Endothelial cell of umbilical vein (primary cell): ENCODE measurements at regions of chr6 and their contacts with region 1.

Region 1: GRCh38 chr6:169831450-169832246 is 80.2 kb downstream of the ERMARD start:
- DNase-seq: peak; percentile 77
- H3K4me3 ChIP-seq: no peak overlapping the region
- H3K27ac ChIP-seq: no peak overlapping the region
- H3K4me1 ChIP-seq: peaks cover 14% of the 10 kb centered on the region
- H3K27me3 ChIP-seq: peaks cover 0 to 1% of the 10 kb centered on the region in 2 experiments
- CTCF ChIP-seq: peak; percentile 85 to 93
- POLR2A ChIP-seq: no peak

Region 2: GRCh38 chr6:169738204-169738975 is 93.3 kb before region 1 on chr6:
- CTCF ChIA-PET with region 1: no interaction called
- POLR2A ChIA-PET with region 1: no interaction called
- dilution Hi-C with region 1: no loop called
- intact Hi-C with region 1: no loop called
- DNase-seq: no peak
- H3K4me3 ChIP-seq: no peak overlapping the region
- H3K27ac ChIP-seq: no peak overlapping the region
- H3K4me1 ChIP-seq: no peaks in the 10 kb centered on the region
- H3K27me3 ChIP-seq: peaks cover 0 to 8% of the 10 kb centered on the region in 2 experiments
- CTCF ChIP-seq: no peak
- POLR2A ChIP-seq: no peak

Region 3: DNA sequence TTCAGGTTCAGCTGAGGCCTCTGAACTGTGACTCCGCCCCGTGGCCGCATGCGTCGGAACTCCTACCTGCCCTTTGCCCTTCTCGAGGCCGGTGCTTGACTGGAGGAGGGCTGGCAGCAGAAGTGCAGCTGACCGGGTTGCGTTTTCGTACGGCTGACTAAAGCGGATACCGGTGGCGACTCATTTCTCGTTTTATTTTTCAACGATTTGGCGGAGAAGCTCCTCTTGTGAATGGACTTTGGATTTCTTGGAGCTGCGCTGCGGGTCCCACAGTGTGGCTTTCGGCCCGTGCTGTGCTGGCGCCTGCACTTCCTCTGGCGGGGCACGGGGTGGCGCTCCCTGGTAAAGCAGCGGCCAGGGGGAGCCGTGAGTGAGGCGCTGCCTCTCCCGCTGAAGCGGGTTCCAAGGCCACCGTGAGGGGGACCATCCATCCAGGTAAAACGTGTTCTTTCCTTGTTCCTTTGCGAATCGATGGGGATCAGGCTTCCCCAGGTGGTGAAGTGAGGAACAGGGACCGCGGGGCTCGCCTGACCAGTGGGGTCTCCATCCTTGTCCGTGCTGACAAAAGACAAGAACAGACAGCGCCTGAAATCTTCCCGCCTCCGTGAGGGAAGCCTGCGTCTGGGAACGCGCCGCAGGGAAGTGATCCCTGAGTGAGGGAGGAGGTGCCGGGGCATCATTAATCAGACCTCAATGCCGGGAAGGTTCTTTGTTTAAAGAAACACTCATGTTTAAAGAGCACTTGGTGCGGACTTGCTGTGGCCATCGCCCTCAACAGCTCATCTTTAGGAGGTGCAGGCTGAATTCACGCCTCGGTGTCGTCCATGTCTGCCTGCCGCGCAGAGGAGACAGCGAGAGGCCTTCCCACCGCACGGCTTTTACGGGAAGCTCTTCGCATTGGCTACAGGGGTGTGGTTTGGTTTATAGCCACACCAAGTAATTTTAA is 41.4 kb before region 1 on chr6:
- CTCF ChIA-PET with region 1: interaction called, 35 read pairs
- POLR2A ChIA-PET with region 1: no interaction called
- dilution Hi-C with region 1: no loop called
- intact Hi-C with region 1: loop called (anchors 1 kb)
- DNase-seq: peak; percentile 75
- H3K4me3 ChIP-seq: peak overlapping the region; percentile 14 to 33 (median 24)
- H3K27ac ChIP-seq: no peak overlapping the region
- H3K4me1 ChIP-seq: peaks cover 6% of the 10 kb centered on the region
- H3K27me3 ChIP-seq: peaks cover 0 to 4% of the 10 kb centered on the region in 2 experiments
- CTCF ChIP-seq: peak; percentile 97 to 99
- POLR2A ChIP-seq: no peak

Region 4: DNA sequence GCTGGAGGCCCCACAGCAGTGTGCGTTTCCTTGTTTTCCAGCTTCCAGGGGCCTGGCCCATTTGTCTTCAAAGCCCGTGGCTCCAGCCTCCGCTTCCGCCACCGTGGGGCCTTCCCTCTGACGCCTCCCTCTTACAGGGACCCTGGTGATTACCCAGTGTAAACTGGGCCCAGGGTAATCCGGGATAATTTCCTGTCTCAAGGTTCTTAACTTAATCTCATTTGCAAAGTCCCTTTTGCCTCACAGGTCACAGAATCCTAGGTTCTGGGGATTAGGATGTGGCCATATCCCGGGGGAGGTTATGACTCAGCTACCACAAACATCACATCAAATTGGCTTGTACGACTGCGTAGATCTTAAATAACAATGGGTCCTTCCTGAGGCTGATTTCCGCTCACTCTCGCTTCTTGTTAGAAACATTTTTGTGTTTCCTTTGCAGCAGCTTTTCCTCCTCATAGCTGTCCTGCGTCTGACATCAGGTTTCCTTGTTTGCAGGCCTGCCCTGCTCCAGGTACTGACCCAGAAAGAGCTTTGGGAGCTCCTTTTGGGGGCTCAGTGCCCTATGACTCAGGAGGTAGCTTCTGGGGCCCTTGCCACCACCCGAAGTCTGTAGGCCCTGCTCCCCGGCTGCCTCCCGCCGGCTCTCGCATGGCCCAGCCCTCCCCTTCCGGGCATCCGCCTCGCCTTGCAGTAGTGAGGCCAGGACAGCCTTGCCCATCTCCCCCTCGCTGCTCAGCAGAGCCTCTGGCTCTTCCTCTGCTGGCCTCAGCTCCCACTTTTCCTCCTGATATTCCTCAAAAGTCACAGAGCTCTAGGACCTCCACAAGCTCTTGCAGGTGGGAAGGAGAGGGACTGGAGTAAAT is 20.2 kb after region 1 on chr6:
- CTCF ChIA-PET with region 1: interaction called, 42 read pairs
- POLR2A ChIA-PET with region 1: no interaction called
- dilution Hi-C with region 1: no loop called
- intact Hi-C with region 1: loop called (anchors 1 kb)
- DNase-seq: peak; percentile 93
- H3K4me3 ChIP-seq: peak overlapping the region in 1 of 3 experiments; percentile 6
- H3K27ac ChIP-seq: peak overlapping the region; percentile 95
- H3K4me1 ChIP-seq: peaks cover 24% of the 10 kb centered on the region
- H3K27me3 ChIP-seq: no peaks in the 10 kb centered on the region
- CTCF ChIP-seq: no peak
- POLR2A ChIP-seq: peak; percentile 58

Region 5: DNA sequence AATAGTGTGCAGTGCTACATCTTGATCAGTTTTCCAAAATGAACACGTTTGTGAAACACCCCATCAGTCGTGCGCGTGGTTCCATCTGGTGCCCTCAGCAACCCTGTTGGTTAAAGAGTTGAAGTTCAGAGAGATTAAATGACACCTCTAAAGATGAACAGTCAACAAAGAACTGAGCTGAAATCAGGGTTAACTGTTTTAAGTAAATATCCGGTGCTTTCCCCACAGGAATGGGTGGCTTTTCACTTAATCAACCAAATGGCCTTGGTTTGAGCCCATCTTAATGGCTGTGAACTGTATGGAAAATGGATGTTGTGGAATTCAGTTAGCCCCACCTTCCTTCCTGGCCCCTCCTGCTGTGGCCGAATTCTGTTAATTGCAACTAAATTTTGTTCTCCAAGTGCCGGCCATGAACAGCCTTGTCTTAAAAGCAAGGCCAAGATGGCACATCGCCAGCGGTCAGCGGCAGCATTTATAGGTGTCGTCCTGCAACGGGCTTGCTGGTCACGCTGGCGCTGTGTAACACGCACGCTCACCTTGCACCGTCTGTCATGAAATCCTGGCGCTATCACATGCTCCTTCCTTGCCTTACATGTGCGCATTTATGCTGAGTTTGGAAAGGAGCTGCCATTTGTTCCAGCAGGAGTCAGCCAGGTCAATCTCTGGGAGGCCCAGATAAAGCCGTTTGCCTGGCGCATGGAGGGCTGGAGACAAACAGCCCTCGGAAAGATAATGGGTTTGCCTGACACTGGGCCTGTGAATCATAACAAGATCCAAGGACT is 84.3 kb after region 1 on chr6:
- CTCF ChIA-PET with region 1: interaction called, 17 read pairs
- POLR2A ChIA-PET with region 1: no interaction called
- dilution Hi-C with region 1: no loop called
- intact Hi-C with region 1: no loop called
- DNase-seq: peak; percentile 98
- H3K4me3 ChIP-seq: no peak overlapping the region
- H3K27ac ChIP-seq: no peak overlapping the region
- H3K4me1 ChIP-seq: peaks cover 12% of the 10 kb centered on the region
- H3K27me3 ChIP-seq: peaks cover 2 to 4% of the 10 kb centered on the region in 2 experiments
- CTCF ChIP-seq: no peak
- POLR2A ChIP-seq: no peak

Region 6: GRCh38 chr6:170003027-170003426 is 171.4 kb after region 1 on chr6:
- CTCF ChIA-PET with region 1: interaction called, 58 read pairs
- POLR2A ChIA-PET with region 1: no interaction called
- dilution Hi-C with region 1: no loop called
- intact Hi-C with region 1: loop called (anchors 1 kb)
- DNase-seq: no peak
- H3K4me3 ChIP-seq: no peak overlapping the region
- H3K27ac ChIP-seq: no peak overlapping the region
- H3K4me1 ChIP-seq: no peaks in the 10 kb centered on the region
- H3K27me3 ChIP-seq: no peaks in the 10 kb centered on the region
- CTCF ChIP-seq: peak in 1 of 2 donors; percentile 39
- POLR2A ChIP-seq: no peak

Region 7: DNA sequence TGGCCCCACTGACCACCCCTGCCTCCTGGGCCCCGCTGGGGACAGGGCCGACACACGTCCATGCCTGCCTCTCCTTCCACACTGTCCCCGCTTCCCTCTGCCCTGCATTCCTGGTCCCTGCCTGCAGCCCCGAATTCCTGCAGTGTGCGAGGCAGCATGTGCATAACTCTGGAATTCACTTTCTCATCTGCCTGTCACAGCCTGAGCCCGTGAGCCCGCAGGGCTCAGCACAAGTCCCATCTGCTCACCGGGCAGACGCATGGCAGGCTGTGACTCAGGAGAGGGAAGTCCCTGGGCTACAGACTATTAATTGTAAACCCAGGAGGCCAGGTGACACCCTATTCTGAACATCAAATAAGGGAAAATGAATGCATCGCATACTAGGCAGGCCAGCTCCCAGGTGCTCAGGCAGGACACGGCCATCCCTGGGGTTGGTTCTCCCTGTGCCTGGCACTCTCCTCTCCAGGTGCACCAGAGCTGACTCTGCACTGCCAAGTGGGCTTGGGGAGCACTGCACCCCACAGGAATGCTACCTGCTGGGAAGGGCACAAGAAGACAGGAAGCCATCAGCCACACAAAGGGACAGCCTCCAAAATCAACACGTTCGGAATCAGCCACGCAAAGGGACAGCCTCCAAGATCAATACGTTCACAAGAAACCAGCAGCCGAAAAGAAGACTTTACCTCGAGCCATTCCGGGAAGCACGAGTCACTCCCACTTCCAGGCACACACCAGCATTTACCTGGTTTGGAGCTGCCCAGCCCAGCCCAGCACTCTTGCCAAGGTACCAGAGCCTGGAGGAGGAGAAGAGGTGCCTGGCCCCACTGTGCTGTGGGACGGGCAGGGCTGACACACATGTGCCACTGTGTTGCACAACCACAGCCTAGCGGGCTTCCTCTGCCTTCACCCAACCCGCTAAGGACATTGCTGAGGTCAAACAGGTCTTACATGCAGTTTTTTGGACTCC is 393.3 kb after region 1 on chr6:
- CTCF ChIA-PET with region 1: interaction called, 4 read pairs
- POLR2A ChIA-PET with region 1: no interaction called
- dilution Hi-C with region 1: no loop called
- intact Hi-C with region 1: loop called (anchors 5 kb)
- DNase-seq: no peak
- H3K4me3 ChIP-seq: no peak overlapping the region
- H3K27ac ChIP-seq: no peak overlapping the region
- H3K4me1 ChIP-seq: no peaks in the 10 kb centered on the region
- H3K27me3 ChIP-seq: peaks cover 0 to 3% of the 10 kb centered on the region in 2 experiments
- CTCF ChIP-seq: no peak
- POLR2A ChIP-seq: no peak

Region 8: GRCh38 chr6:170438402-170438753 is 606.7 kb after region 1 on chr6:
- CTCF ChIA-PET with region 1: interaction called, 15 read pairs
- POLR2A ChIA-PET with region 1: no interaction called
- dilution Hi-C with region 1: no loop called
- intact Hi-C with region 1: no loop called
- DNase-seq: peak; percentile 86
- H3K4me3 ChIP-seq: peak overlapping the region in 2 of 3 experiments; percentile 3 to 22
- H3K27ac ChIP-seq: peak overlapping the region; percentile 47
- H3K4me1 ChIP-seq: peaks cover 5% of the 10 kb centered on the region
- H3K27me3 ChIP-seq: no peaks in the 10 kb centered on the region
- CTCF ChIP-seq: no peak
- POLR2A ChIP-seq: no peak